RWPE1 (cell line): ENCODE measurements at regions of chr17 and their contacts with region 1.

Region 1: GRCh38 chr17:2982854-2983253 is 80.6 kb downstream of the OR1D5 start:
- DNase-seq: peak; percentile 55
- H3K27ac ChIP-seq: peak overlapping the region; percentile 28; the same call in 1 of the 2 replicates
- CTCF ChIP-seq: no peak

Region 2: DNA sequence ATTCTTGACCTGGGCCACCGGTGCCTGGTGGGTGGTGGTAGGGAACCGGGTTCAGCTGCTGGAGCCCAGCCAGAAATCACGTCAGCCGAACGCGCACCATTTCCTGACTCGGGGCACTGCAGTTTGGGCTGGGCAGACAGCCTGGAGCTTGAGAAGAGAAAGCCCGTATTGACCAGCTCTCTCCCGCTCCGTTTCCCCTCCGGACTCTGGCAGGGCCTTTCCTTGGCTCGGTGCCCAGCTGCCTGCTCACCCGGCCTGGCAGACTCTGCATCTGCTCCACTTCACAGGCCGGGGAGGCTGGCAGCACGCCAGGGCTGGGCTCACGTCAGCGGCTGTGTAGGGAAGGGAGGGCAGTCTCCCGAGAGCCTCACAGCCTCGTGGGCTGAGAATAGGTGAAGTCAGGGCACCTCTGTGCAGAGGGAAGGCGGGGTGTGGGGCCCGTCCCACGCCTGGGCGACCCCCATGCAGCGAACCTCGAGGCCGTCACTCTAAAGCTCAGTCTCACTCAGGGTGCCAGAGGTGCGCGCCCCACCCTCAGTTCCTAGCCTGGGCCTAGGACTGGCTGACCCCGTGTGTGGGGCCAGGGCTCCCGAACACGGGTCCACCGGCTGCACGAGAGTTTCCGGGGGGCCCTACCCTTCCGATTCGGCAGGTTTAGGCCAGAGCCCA is 21.4 kb after region 1 on chr17:
- CTCF ChIA-PET with region 1: no interaction called
- POLR2A ChIA-PET with region 1: interaction called, 10 read pairs
- DNase-seq: peak; percentile 98
- H3K27ac ChIP-seq: peak overlapping the region; percentile 90
- CTCF ChIP-seq: no peak